CD4-positive, alpha-beta memory T cell (primary cell): ENCODE measurements at regions of chr1 and their contacts with region 1.

Region 1: GRCh38 chr1:206734499-206735142 is 36.0 kb upstream of the IL19 start:
- DNase-seq: peak; percentile 64 to 82 (median 71)
- H3K4me3 ChIP-seq: no peak overlapping the region
- H3K4me3 Mint-ChIP-seq: peak overlapping the region in 3 of 8 donors; percentile 23 to 76 (median 54)
- H3K27ac ChIP-seq: peak overlapping the region; percentile 53
- H3K27ac Mint-ChIP-seq: peak overlapping the region; percentile 92 to 97 (median 94)
- H3K4me1 ChIP-seq: peaks cover 56% of the 10 kb centered on the region
- H3K4me1 Mint-ChIP-seq: peaks cover 47 to 56% (median 52%) of the 10 kb centered on the region in 4 donors
- H3K27me3 ChIP-seq: no peaks in the 10 kb centered on the region
- H3K27me3 Mint-ChIP-seq: no peaks in the 10 kb centered on the region

Region 2: GRCh38 chr1:206761159-206761768 is 26.6 kb after region 1 on chr1:
- CTCF ChIA-PET with region 1: interaction called, 91 read pairs
- POLR2A ChIA-PET with region 1: interaction called, 63 read pairs
- intact Hi-C with region 1: loop called (anchors 1 kb)
- DNase-seq: no peak
- H3K4me3 ChIP-seq: no peak overlapping the region
- H3K4me3 Mint-ChIP-seq: peak overlapping the region in 1 of 8 donors; percentile 17
- H3K27ac ChIP-seq: no peak overlapping the region
- H3K27ac Mint-ChIP-seq: peak overlapping the region in 2 of 7 donors; percentile 51 to 82
- H3K4me1 ChIP-seq: peaks cover 63% of the 10 kb centered on the region
- H3K4me1 Mint-ChIP-seq: peaks cover 21 to 36% (median 31%) of the 10 kb centered on the region in 4 donors
- H3K27me3 ChIP-seq: no peaks in the 10 kb centered on the region
- H3K27me3 Mint-ChIP-seq: no peaks in the 10 kb centered on the region

Region 3: GRCh38 chr1:206797534-206798383 is 63.1 kb after region 1 on chr1:
- CTCF ChIA-PET with region 1: interaction called, 351 read pairs
- POLR2A ChIA-PET with region 1: interaction called, 158 read pairs
- intact Hi-C with region 1: no loop called
- DNase-seq: peak in 2 of 5 donors; percentile 25 to 45
- H3K4me3 ChIP-seq: no peak overlapping the region
- H3K4me3 Mint-ChIP-seq: peak overlapping the region in 1 of 8 donors; percentile 48
- H3K27ac ChIP-seq: no peak overlapping the region
- H3K27ac Mint-ChIP-seq: peak overlapping the region in 2 of 7 donors; percentile 38 to 76
- H3K4me1 ChIP-seq: peaks cover 50% of the 10 kb centered on the region
- H3K4me1 Mint-ChIP-seq: peaks cover 37 to 79% (median 54%) of the 10 kb centered on the region in 4 donors
- H3K27me3 ChIP-seq: no peaks in the 10 kb centered on the region
- H3K27me3 Mint-ChIP-seq: peaks cover 0 to 2% of the 10 kb centered on the region in 2 donors

Region 4: GRCh38 chr1:206816390-206817287 is 82.0 kb after region 1 on chr1:
- CTCF ChIA-PET with region 1: interaction called, 351 read pairs
- POLR2A ChIA-PET with region 1: interaction called, 3 read pairs
- intact Hi-C with region 1: no loop called
- DNase-seq: peak; percentile 53 to 75 (median 68)
- H3K4me3 ChIP-seq: no peak overlapping the region
- H3K4me3 Mint-ChIP-seq: peak overlapping the region; percentile 7 to 67 (median 55)
- H3K27ac ChIP-seq: peak overlapping the region; percentile 40
- H3K27ac Mint-ChIP-seq: peak overlapping the region; percentile 74 to 92 (median 88)
- H3K4me1 ChIP-seq: peaks cover 19% of the 10 kb centered on the region
- H3K4me1 Mint-ChIP-seq: peaks cover 17 to 19% (median 19%) of the 10 kb centered on the region in 4 donors
- H3K27me3 ChIP-seq: no peaks in the 10 kb centered on the region
- H3K27me3 Mint-ChIP-seq: no peaks in the 10 kb centered on the region

Region 5: GRCh38 chr1:206918076-206918475 is 183.5 kb after region 1 on chr1:
- CTCF ChIA-PET with region 1: interaction called, 106 read pairs
- POLR2A ChIA-PET with region 1: interaction called, 25 read pairs
- intact Hi-C with region 1: no loop called
- DNase-seq: no peak
- H3K4me3 ChIP-seq: peak overlapping the region; percentile 55 to 94
- H3K4me3 Mint-ChIP-seq: no peak overlapping the region
- H3K27ac ChIP-seq: peak overlapping the region; percentile 38
- H3K27ac Mint-ChIP-seq: peak overlapping the region; percentile 83 to 96 (median 94)
- H3K4me1 ChIP-seq: peaks cover 78% of the 10 kb centered on the region
- H3K4me1 Mint-ChIP-seq: peaks cover 59 to 67% (median 66%) of the 10 kb centered on the region in 4 donors
- H3K27me3 ChIP-seq: no peaks in the 10 kb centered on the region
- H3K27me3 Mint-ChIP-seq: no peaks in the 10 kb centered on the region

Region 6: GRCh38 chr1:206982216-206982615 is 247.6 kb after region 1 on chr1:
- CTCF ChIA-PET with region 1: interaction called, 67 read pairs
- POLR2A ChIA-PET with region 1: interaction called, 6 read pairs
- intact Hi-C with region 1: loop called (anchors 1 kb)
- DNase-seq: peak; percentile 50 to 60 (median 53)
- H3K4me3 ChIP-seq: no peak overlapping the region
- H3K4me3 Mint-ChIP-seq: no peak overlapping the region
- H3K27ac ChIP-seq: no peak overlapping the region
- H3K27ac Mint-ChIP-seq: no peak overlapping the region
- H3K4me1 ChIP-seq: no peaks in the 10 kb centered on the region
- H3K4me1 Mint-ChIP-seq: no peaks in the 10 kb centered on the region
- H3K27me3 ChIP-seq: no peaks in the 10 kb centered on the region
- H3K27me3 Mint-ChIP-seq: peaks cover 12 to 17% of the 10 kb centered on the region in 2 donors

Region 7: GRCh38 chr1:207064561-207064960 is 329.9 kb after region 1 on chr1:
- CTCF ChIA-PET with region 1: no interaction called
- POLR2A ChIA-PET with region 1: no interaction called
- intact Hi-C with region 1: no loop called
- DNase-seq: no peak
- H3K4me3 ChIP-seq: no peak overlapping the region
- H3K4me3 Mint-ChIP-seq: no peak overlapping the region
- H3K27ac ChIP-seq: no peak overlapping the region
- H3K27ac Mint-ChIP-seq: no peak overlapping the region
- H3K4me1 ChIP-seq: no peaks in the 10 kb centered on the region
- H3K4me1 Mint-ChIP-seq: peaks cover 0 to 6% (median 2%) of the 10 kb centered on the region in 4 donors
- H3K27me3 ChIP-seq: no peaks in the 10 kb centered on the region
- H3K27me3 Mint-ChIP-seq: no peaks in the 10 kb centered on the region